ENCODE measurements at regions of chr9 and their contacts with region 1.

Region 1: GRCh38 chr9:113309204-113309813 is 6.1 kb upstream of the RNF183 start:
- DNase-seq: no peak
- H3K4me3 ChIP-seq: no peak overlapping the region
- CTCF ChIP-seq: no peak
- POLR2A ChIP-seq: no peak

Region 2: GRCh38 chr9:113409883-113410206 is 100.5 kb after region 1 on chr9:
- intact Hi-C with region 1: loop called (anchors 5 kb)
- DNase-seq: no peak
- H3K4me3 ChIP-seq: peak overlapping the region; percentile 75
- CTCF ChIP-seq: no peak
- POLR2A ChIP-seq: no peak

Region 3: GRCh38 chr9:113446323-113446740 is 137.0 kb after region 1 on chr9:
- intact Hi-C with region 1: no loop called
- DNase-seq: no peak
- H3K4me3 ChIP-seq: no peak overlapping the region
- CTCF ChIP-seq: no peak
- POLR2A ChIP-seq: no peak

Measured in lower leg skin (tissue), 4 donors.